ENCODE measurements at regions of chr3 and their contacts with region 1.

Region 1: DNA sequence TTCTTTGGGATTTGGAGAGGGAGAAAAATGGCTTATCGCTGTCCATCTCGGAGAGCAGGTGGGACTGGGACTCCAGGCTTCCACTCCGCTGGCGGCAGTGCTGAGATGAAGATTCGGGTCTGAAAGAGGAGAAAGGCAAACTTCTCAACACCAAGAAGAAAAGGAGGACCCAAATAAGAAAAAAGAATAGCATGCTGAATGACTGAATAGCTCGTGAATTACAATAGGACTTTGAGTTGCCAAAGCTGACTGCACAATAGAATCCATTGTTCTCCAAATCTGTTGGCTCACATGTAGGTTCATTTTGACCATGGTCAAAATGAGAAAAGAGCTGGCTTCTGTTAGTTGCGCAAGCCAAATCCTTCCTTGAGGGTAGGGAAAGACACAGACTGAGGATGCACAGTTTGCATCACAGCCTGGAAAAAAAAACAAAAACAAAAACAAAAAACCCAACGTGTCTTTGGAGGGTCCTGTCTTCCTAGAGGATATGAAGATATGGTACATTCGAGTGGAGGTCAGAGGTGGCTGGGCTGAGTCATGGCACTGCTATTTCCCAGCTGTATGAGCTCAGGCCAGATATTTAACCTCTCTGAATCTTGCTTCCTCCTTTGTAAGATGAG is 59.3 kb upstream of the LMOD3 start:
- DNase-seq: no peak

Region 2: GRCh38 chr3:68866157-68866556 is 315.5 kb before region 1 on chr3:
- intact Hi-C with region 1: no loop called
- DNase-seq: no peak

Region 3: GRCh38 chr3:68963891-68964290 is 217.8 kb before region 1 on chr3:
- intact Hi-C with region 1: no loop called
- DNase-seq: no peak

Region 4: GRCh38 chr3:69142090-69142489 is 39.6 kb before region 1 on chr3:
- intact Hi-C with region 1: no loop called
- DNase-seq: no peak

Region 5: DNA sequence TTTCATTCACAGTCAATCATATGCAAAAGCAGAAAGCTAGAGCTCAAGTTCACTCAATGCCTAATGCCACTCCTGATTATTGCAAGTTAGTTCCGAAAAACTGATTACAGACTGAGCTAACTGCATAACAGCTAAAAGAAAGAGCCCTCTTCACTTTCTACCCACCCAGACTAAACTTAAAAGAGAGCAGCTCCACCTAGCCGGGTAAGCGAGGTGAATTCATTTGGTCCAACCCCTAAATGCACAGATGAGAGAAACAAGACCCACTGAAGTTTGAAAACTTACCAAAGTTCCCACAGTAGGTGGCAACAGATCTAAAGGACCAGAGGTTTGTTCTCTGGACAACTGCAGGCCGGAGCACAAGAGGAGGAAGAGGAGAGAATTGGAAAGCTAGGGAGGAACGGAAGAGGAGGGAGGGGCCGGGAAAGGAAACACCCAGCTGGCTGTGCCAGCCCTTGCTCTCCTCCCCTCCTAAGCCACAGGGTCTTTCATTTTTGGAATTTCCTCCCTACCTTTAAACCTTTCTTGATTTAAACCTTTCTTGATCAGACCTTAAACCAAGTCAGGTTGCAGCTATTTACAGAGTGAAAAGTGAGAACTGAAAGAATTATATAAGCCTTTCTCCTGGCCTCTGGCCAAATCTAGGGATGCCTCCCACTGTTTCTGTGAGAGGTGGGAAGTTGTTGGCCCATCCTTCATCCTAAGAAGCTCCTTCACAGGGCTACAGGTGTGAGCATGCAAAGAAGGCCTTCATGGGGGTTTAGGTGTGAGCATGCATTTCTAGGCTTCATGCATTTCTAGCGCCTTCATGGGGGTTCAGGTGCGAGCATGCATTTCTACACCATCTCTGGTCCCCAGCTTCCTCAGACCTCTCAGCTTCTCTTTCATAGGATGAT is 55.4 kb after region 1 on chr3:
- intact Hi-C with region 1: loop called (anchors 5 kb)
- DNase-seq: no peak